ENCODE measurements at regions of chr19 and their contacts with region 1.

Region 1: GRCh38 chr19:9075064-9075949 is 11.6 kb upstream of the OR1M1 start:
- DNase-seq: peak; percentile 5 to 92 (median 65)
- H3K4me3 ChIP-seq: peak overlapping the region in 1 of 59 donors; percentile 6
- H3K27ac ChIP-seq: peak overlapping the region in 39 of 59 donors; percentile 2 to 75 (median 47)
- H3K27me3 ChIP-seq: no peaks in the 10 kb centered on the region
- CTCF ChIP-seq: no peak

Region 2: DNA sequence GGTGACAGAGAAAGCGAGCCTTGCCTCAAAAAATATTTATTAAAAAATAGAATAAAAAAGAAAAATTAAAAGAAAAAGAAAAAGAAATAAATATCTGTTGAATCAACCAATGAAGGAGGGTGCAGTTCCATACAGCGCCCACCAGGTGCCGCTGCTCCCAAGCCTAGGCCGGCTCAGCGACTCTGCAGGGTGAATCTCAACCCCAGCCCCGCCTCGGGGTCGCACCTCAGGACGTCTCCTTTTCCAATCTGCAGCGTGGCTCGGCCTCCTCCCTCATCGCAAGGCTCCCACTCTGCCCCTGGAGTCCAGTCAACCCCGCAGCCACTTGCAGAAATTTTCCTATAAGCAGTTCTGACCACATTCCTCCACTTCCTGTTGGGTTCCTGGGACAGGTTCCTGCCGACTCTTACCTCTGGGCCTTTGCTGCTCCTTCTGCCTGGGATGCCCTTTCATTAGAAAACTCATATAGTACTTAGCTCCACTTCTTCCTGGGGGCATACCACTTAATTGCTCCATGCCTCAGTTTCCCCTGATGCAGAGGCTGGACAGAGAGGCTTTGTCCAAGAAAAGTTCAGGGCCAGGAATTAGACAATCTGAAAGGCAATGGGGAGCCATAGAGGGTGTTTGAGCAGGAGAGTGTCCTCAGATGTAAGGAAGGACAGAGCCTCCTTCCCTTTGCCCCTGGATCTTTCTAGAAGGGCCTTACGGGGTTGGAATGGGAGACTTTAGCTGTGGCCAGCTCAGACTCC is 420.5 kb before region 1 on chr19:
- intact Hi-C with region 1: loop called (anchors 2 kb)
- DNase-seq: peak in 6 of 10 donors; percentile 27 to 64 (median 46)
- H3K4me3 ChIP-seq: peak overlapping the region in 13 of 59 donors; percentile 15 to 44 (median 23)
- H3K27ac ChIP-seq: no peak overlapping the region
- H3K27me3 ChIP-seq: peaks cover 0 to 12% (median 0%) of the 10 kb centered on the region in 45 donors
- CTCF ChIP-seq: peak; percentile 89 to 99 (median 96)

Region 3: DNA sequence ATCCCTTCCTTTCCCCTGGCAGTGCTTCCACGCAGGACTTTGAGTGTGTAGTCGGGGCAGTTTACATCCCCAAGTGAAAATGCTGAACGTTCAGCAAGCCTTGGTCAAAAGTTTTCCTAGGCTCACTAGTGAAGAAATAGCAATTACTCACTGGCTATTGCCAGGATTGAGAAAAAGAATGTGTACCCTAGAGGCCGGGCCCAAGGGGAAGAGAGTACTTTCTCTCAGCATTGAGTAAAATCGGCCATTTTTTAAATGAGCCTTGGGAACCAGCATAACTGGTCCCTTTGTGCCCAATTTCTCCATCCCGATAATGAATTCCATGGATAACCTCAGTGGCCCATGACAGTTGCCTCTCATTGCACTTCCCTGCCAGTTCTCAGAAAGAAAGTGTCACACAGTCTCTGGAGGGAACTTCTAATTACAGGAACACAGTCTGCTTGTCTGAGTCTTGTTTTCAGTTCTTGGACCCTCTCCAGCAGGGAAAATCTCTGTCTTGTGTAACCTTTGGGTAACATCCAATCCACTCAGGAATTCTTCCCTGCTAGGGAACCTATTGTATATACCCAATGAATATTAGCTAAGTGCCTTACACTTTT is 96.2 kb after region 1 on chr19:
- intact Hi-C with region 1: no loop called
- DNase-seq: no peak
- H3K4me3 ChIP-seq: no peak overlapping the region
- H3K27ac ChIP-seq: no peak overlapping the region
- H3K27me3 ChIP-seq: no peaks in the 10 kb centered on the region
- CTCF ChIP-seq: no peak

Measured in dorsolateral prefrontal cortex (tissue), 120 donors.